ENCODE measurements at regions of chr4 and their contacts with region 1.

Region 1: GRCh38 chr4:139301113-139301820 is at the start of gene NAA15:
- DNase-seq: peak; percentile 96
- ATAC-seq: peak; percentile 95
- H3K4me3 ChIP-seq: peak within 1 kb of the TSS; percentile 91 to 98 (median 94)
- H3K27ac ChIP-seq: peak within 1 kb of the TSS; percentile 86
- H3K4me1 ChIP-seq: peaks cover 69% of the 10 kb centered on the region
- H3K27me3 ChIP-seq: no peaks in the 10 kb centered on the region; a peak in 1 of 5 replicates
- CTCF ChIP-seq: peak; percentile 29; the same call in 1 of the 2 replicates
- EP300 ChIP-seq: peak; percentile 34 to 41; a peak in 1 of 4 replicates
- POLR2A ChIP-seq: peak; percentile 77 to 93
- RAD21 ChIP-seq: no peak
- total RNA-seq, gene NAA15: 50.2 and 81.2 TPM in 2 replicates

Region 2: GRCh38 chr4:139015269-139015947 is 285.9 kb before region 1 on chr4 and contains the start of gene NOCT:
- CTCF ChIA-PET with region 1: no interaction called
- POLR2A ChIA-PET with region 1: interaction called, 3 read pairs
- in situ Hi-C with region 1: no loop called
- intact Hi-C with region 1: loop called (anchors 5 kb)
- DNase-seq: peak; percentile 80
- ATAC-seq: peak; percentile 95
- H3K4me3 ChIP-seq: peak within 1 kb of the TSS; percentile 79 to 90 (median 81)
- H3K27ac ChIP-seq: peak within 1 kb of the TSS; percentile 85
- H3K4me1 ChIP-seq: peaks cover 59% of the 10 kb centered on the region
- H3K27me3 ChIP-seq: no peaks in the 10 kb centered on the region; a peak in 1 of 5 replicates
- CTCF ChIP-seq: no peak
- EP300 ChIP-seq: 0 out of 4 replicates have a peak, but pooled peaks of 1 of the 2 experiments have one; percentile 15
- POLR2A ChIP-seq: peak; percentile 96 to 97
- RAD21 ChIP-seq: 0 out of 2 replicates have a peak, but pooled peaks have one; percentile 28
- total RNA-seq, gene NOCT: 11.0 and 13.1 TPM in 2 replicates

Region 3: DNA sequence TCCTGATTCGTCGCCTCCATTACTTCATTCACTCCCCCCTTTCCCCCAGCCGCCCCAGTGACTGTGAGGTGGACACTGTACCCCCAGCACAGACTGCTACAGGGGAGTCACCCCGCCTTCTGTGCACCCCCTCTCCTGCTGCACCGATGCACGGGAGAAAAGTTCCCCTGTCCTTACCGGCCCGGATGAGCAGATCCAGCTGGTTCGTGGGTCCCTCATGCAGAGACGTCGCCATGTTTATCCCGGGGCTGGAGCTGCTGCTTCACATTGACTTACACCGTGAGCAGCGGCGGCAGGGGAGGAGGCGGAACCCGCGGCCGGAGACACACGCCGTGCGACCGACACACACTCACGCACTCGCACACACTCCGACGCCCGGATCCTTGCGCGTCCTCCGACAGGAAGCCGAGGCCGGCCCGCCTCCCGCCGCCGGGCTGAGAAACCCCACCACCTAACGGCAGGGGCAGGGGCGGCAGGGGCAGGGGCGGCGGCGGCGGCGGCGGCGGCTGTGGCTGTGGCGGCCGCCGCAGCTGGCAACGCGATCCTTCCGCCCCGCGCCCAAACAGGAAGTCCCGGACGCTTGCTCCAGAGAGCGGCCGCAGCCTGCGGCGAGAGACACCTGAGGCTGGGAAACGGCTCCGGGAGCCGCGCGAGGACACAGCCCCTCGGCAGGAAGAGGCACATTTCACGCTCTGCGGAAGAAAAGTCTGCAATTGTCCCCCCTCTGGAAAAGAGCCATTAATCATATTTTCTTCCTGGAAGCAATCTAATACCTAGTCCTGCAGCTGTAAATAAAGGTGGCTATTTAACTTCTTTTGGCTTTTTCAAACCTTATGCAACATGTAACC is 217.1 kb before region 1 on chr4:
- CTCF ChIA-PET with region 1: no interaction called
- POLR2A ChIA-PET with region 1: interaction called, 9 read pairs
- in situ Hi-C with region 1: loop called (anchors 10 kb)
- intact Hi-C with region 1: loop called (anchors 5 kb)
- DNase-seq: peak; percentile 89
- ATAC-seq: peak; percentile 79
- H3K4me3 ChIP-seq: peak overlapping the region; percentile 69 to 95 (median 71)
- H3K27ac ChIP-seq: peak overlapping the region; percentile 94
- H3K4me1 ChIP-seq: peaks cover 34% of the 10 kb centered on the region
- H3K27me3 ChIP-seq: no peaks in the 10 kb centered on the region; a peak in 1 of 5 replicates
- CTCF ChIP-seq: peak; percentile 49; the same call in 1 of the 2 replicates
- EP300 ChIP-seq: no peak
- POLR2A ChIP-seq: peak; percentile 72 to 82
- RAD21 ChIP-seq: peak; percentile 22; the same call in 1 of the 2 replicates

Region 4: GRCh38 chr4:139099366-139099982 is 201.8 kb before region 1 on chr4:
- CTCF ChIA-PET with region 1: interaction called, 9 read pairs
- POLR2A ChIA-PET with region 1: no interaction called
- in situ Hi-C with region 1: no loop called
- intact Hi-C with region 1: loop called (anchors 2 kb)
- DNase-seq: peak; percentile 82
- ATAC-seq: peak; percentile 86
- H3K4me3 ChIP-seq: no peak overlapping the region
- H3K27ac ChIP-seq: no peak overlapping the region
- H3K4me1 ChIP-seq: no peaks in the 10 kb centered on the region
- H3K27me3 ChIP-seq: no peaks in the 10 kb centered on the region
- CTCF ChIP-seq: peak; percentile 87
- EP300 ChIP-seq: no peak
- POLR2A ChIP-seq: no peak
- RAD21 ChIP-seq: peak; percentile 70

Region 5: DNA sequence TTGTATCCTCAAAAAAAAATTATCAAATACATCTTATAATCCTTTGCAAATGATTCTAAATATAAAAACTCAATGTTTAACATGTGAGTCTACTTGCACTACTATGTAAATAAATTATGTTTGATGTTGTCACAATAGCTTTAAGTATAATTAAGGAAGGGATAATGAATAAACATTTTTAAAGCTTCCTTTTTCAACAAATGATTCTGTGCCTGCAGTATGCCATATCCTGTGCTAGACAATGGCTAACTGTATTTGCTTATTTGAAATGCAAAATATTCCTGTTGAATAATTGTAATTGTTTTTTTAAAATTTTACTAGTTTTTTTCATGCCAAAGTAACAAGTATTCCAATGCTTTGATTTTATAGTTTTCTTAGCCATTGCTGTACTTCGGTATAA is 60.0 kb after region 1 on chr4:
- CTCF ChIA-PET with region 1: no interaction called
- POLR2A ChIA-PET with region 1: no interaction called
- in situ Hi-C with region 1: no loop called
- intact Hi-C with region 1: no loop called
- DNase-seq: no peak
- ATAC-seq: no peak
- H3K4me3 ChIP-seq: no peak overlapping the region
- H3K27ac ChIP-seq: no peak overlapping the region
- H3K4me1 ChIP-seq: no peaks in the 10 kb centered on the region
- H3K27me3 ChIP-seq: no peaks in the 10 kb centered on the region
- CTCF ChIP-seq: no peak
- EP300 ChIP-seq: no peak
- POLR2A ChIP-seq: no peak
- RAD21 ChIP-seq: no peak

Region 6: DNA sequence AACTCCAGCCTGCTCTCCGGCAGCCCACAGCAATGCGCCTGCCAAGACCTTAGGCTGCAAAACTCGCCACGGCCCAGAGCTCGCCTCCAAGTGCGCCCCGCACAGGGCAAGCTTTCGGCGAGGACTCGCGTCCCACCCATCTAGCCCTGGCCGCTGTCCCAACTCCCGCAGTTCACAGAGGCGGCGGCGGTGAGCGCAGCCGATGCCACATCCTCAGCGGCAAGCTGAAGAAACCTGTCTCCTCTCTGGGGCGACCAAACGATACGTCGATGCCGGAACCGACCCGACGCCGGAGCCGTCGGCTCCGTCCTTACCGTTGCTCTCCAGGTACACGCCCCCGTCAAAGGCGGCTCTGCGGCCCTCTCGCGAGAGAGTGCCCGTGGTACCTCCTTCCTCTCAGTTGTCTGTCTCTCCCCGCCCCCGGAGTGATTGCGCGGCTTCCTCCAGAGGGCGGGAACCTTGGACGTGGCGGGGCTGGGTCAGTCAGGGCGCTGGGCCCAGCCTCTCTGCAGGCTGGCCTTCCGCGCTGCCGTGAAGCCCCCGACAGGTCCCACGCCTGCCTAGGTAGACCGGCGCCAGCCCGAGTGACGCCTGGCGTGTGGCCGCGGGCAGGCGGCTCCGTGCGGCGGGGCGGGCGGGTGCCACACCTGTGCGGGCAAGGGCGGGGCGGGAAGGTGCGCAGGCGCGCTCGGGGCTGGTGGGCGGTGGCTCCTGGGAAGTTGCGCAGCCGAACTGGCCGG is 152.3 kb after region 1 on chr4:
- CTCF ChIA-PET with region 1: no interaction called
- POLR2A ChIA-PET with region 1: interaction called, 4 read pairs
- in situ Hi-C with region 1: no loop called
- intact Hi-C with region 1: loop called (anchors 5 kb)
- DNase-seq: peak; percentile 94
- ATAC-seq: peak; percentile 92
- H3K4me3 ChIP-seq: peak overlapping the region; percentile 68 to 95 (median 93)
- H3K27ac ChIP-seq: peak overlapping the region; percentile 97
- H3K4me1 ChIP-seq: peaks cover 58% of the 10 kb centered on the region
- H3K27me3 ChIP-seq: no peaks in the 10 kb centered on the region; a peak in 1 of 5 replicates
- CTCF ChIP-seq: peak; percentile 58; the same call in 1 of the 2 replicates
- EP300 ChIP-seq: no peak
- POLR2A ChIP-seq: peak; percentile 86 to 92
- RAD21 ChIP-seq: 0 out of 2 replicates have a peak, but pooled peaks have one; percentile 3

Measured in HepG2 (cell line).